Common myeloid progenitor, CD34-positive (primary cell): ENCODE measurements at regions of chr10 and their contacts with region 1.

Region 1: GRCh38 chr10:79468841-79469585 is 23.6 kb upstream of the ZCCHC24 start:
- DNase-seq: no peak
- H3K4me3 ChIP-seq: no peak overlapping the region
- H3K27ac ChIP-seq: no peak overlapping the region
- H3K4me1 ChIP-seq: peaks cover 0 to 22% (median 2%) of the 10 kb centered on the region in 4 experiments
- H3K27me3 ChIP-seq: no peaks in the 10 kb centered on the region

Region 2: DNA sequence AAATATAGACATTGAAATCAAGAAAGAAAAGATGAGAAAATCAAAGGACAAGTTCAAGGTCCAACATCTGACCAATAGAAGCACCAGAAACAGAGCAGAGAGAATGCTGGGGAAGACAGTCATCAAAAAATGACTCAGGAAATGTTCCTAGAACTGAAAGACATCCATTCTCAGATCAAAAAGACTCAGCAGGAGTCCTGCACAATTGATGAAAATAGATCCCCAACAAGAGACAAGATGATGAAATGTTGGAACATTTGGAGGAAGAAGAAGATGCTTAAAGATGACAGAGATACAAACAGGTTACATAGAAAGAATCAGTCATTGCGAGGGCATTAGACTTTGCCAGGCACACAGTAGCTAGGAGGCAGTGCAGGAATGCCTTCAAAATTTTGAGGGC is 13.3 kb after region 1 on chr10:
- CTCF ChIA-PET with region 1: interaction called, 21 read pairs
- POLR2A ChIA-PET with region 1: interaction called, 4 read pairs
- DNase-seq: no peak
- H3K4me3 ChIP-seq: no peak overlapping the region
- H3K27ac ChIP-seq: no peak overlapping the region
- H3K4me1 ChIP-seq: no peaks in the 10 kb centered on the region
- H3K27me3 ChIP-seq: peaks cover 0 to 2% (median 0%) of the 10 kb centered on the region in 5 experiments

Region 3: DNA sequence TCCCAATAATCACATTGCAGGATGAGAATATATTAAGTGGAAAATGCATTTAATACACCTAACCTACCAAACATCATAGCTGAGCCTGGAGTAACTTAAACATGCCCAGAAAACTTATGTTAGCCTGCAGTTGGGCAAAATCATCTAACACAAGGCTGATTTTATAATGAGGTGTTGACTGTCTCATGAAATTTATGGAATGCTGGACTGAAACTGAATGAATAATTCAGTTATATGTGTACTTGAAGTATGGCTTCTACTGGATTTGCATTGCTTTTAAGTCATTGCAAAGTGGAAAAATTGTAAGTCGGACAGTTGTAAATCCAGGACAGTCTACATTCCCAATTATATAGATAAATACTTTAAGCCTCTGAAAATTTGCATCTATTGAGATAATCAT is 147.2 kb after region 1 on chr10:
- CTCF ChIA-PET with region 1: no interaction called
- POLR2A ChIA-PET with region 1: no interaction called
- DNase-seq: no peak
- H3K4me3 ChIP-seq: no peak overlapping the region
- H3K27ac ChIP-seq: no peak overlapping the region
- H3K4me1 ChIP-seq: peaks cover 0 to 1% (median 0%) of the 10 kb centered on the region in 4 experiments
- H3K27me3 ChIP-seq: no peaks in the 10 kb centered on the region